ENCODE measurements at regions of chr20 and their contacts with region 1.

Region 1: GRCh38 chr20:36199345-36200257 is 36.7 kb upstream of the AAR2 start:
- DNase-seq: peak; percentile 56 to 82 (median 70)
- ATAC-seq: peak; percentile 72
- H3K4me3 ChIP-seq: no peak overlapping the region
- H3K4me3 Mint-ChIP-seq: no peak overlapping the region
- H3K27ac ChIP-seq: no peak overlapping the region
- H3K27ac Mint-ChIP-seq: no peak overlapping the region
- H3K4me1 ChIP-seq: peaks cover 11% of the 10 kb centered on the region
- H3K4me1 Mint-ChIP-seq: peaks cover 6% of the 10 kb centered on the region
- H3K27me3 ChIP-seq: no peaks in the 10 kb centered on the region
- H3K27me3 Mint-ChIP-seq: peaks cover 18% of the 10 kb centered on the region
- CTCF ChIP-seq: peak; percentile 89

Region 2: DNA sequence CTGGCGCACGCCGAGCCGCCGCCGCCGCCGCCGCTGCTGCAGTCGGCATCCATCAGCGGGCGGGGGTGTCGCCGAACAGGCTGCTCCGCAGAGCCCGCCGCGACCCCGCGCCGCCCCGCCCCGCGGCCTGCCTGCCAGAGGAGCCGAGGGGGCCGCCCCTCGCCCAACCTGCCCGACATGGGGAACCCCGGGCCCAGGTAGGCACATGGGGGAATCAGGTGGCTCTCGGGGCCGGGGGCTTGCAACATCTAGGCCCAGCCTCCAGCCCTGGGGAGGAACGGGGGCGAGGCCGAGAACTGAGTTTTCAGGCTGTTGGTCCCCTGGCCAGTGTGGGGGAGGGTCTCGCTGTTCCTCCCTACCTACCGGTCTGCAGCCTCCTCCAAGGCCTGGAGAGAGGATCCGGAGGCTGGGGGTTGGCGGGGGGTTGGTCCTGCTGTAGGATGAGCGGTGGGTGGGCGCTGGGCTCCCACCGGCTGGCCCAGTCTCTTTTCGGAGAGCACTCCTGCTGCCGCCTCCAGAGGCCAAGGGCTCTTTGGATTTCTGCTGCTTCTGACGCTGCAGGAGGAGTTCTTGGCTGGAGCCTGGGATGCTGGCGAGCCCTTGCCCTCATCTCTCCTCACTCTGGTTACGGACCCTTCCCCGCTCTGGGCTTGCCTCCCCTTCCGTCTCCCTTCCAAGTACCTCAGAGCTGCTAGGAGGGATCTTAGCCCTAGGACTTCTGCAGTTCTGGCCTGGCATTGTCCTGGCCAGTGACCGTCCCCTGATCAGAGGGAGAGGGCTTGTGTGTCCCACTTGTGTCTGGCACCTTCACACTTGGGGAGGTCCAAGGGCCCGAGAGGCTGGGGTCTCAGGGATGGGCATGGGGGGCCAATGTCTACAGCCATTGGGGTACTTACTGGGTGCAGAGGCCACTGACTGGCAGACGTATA is 44.6 kb before region 1 on chr20 and contains the start of gene EPB41L1:
- CTCF ChIA-PET with region 1: interaction called, 4 read pairs
- POLR2A ChIA-PET with region 1: no interaction called
- intact Hi-C with region 1: loop called (anchors 1 to 2 kb)
- DNase-seq: no peak
- ATAC-seq: peak; percentile 45
- H3K4me3 ChIP-seq: peak within 1 kb of the TSS; percentile 43
- H3K4me3 Mint-ChIP-seq: peak within 1 kb of the TSS; percentile 78
- H3K27ac ChIP-seq: no peak within 1 kb of the TSS
- H3K27ac Mint-ChIP-seq: no peak within 1 kb of the TSS
- H3K4me1 ChIP-seq: peaks cover 15% of the 10 kb centered on the region
- H3K4me1 Mint-ChIP-seq: peaks cover 6% of the 10 kb centered on the region
- H3K27me3 ChIP-seq: peaks cover 31% of the 10 kb centered on the region in 2 experiments
- H3K27me3 Mint-ChIP-seq: peaks cover 53% of the 10 kb centered on the region
- CTCF ChIP-seq: no peak
- total RNA-seq, gene EPB41L1: 0.19 to 0.25 TPM

Region 3: GRCh38 chr20:36493013-36493800 is 293.6 kb after region 1 on chr20:
- CTCF ChIA-PET with region 1: no interaction called
- POLR2A ChIA-PET with region 1: no interaction called
- intact Hi-C with region 1: loop called in 1 of 2 experiments (anchors 5 kb)
- DNase-seq: peak in 5 of 14 experiments; percentile 11 to 43 (median 32)
- ATAC-seq: no peak
- H3K4me3 ChIP-seq: no peak overlapping the region
- H3K4me3 Mint-ChIP-seq: no peak overlapping the region
- H3K27ac ChIP-seq: peak overlapping the region in 1 of 2 donors; percentile 88
- H3K27ac Mint-ChIP-seq: peak overlapping the region; percentile 88
- H3K4me1 ChIP-seq: peaks cover 46% of the 10 kb centered on the region
- H3K4me1 Mint-ChIP-seq: peaks cover 45% of the 10 kb centered on the region
- H3K27me3 ChIP-seq: no peaks in the 10 kb centered on the region
- H3K27me3 Mint-ChIP-seq: no peaks in the 10 kb centered on the region
- CTCF ChIP-seq: no peak

Region 4: DNA sequence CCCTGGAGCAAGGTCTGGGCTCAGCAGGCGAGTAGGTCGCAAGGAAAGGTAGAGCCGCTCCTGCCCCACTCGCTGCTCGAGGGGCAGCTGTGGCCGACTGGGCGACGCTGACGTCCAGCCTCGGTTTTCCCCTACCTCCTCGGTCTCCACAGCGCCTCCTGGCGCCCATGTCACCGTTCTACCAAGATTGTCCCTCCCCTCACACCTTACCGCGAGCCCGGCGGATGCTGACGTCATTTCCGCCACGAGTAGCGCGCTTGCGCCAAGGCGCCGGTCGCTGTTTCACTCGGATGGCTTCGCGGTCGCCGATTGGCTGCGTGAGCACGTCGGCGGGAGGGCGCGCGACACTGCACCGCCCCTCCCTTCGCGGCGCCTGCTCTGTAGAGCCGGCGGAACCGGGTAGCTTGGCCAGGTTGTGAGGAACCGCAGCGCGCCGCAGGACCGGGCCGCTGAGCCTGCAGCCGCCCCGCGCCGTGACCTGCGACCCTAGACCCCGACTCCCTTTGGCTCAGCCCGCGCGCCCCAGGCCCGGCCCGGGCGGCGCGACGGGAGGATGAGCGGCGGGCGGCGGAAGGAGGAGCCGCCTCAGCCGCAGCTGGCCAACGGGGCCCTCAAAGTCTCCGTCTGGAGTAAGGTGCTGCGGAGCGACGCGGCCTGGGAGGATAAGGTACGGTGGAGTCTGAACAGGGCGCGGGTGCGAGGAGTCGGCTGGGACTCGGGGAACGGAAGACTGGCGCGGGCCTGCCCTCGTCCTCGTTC is 406.0 kb after region 1 on chr20 and contains the start of gene RAB5IF:
- CTCF ChIA-PET with region 1: no interaction called
- POLR2A ChIA-PET with region 1: no interaction called
- intact Hi-C with region 1: no loop called
- DNase-seq: peak; percentile 97 to 100 (median 99)
- ATAC-seq: peak; percentile 89
- H3K4me3 ChIP-seq: peak within 1 kb of the TSS; percentile 100
- H3K4me3 Mint-ChIP-seq: peak within 1 kb of the TSS; percentile 98
- H3K27ac ChIP-seq: peak within 1 kb of the TSS; percentile 93 to 97
- H3K27ac Mint-ChIP-seq: peak within 1 kb of the TSS; percentile 97
- H3K4me1 ChIP-seq: peaks cover 37% of the 10 kb centered on the region
- H3K4me1 Mint-ChIP-seq: peaks cover 35% of the 10 kb centered on the region
- H3K27me3 ChIP-seq: no peaks in the 10 kb centered on the region
- H3K27me3 Mint-ChIP-seq: no peaks in the 10 kb centered on the region
- CTCF ChIP-seq: peak; percentile 95
- total RNA-seq, gene RAB5IF: 62.6 to 74.8 TPM

Region 5: GRCh38 chr20:36754656-36755222 is 555.1 kb after region 1 on chr20:
- CTCF ChIA-PET with region 1: interaction called, 3 read pairs
- POLR2A ChIA-PET with region 1: no interaction called
- intact Hi-C with region 1: loop called in 1 of 2 experiments (anchors 2 kb)
- DNase-seq: peak in 13 of 14 experiments; percentile 7 to 75 (median 22)
- ATAC-seq: peak; percentile 94
- H3K4me3 ChIP-seq: no peak overlapping the region
- H3K4me3 Mint-ChIP-seq: no peak overlapping the region
- H3K27ac ChIP-seq: no peak overlapping the region
- H3K27ac Mint-ChIP-seq: no peak overlapping the region
- H3K4me1 ChIP-seq: no peaks in the 10 kb centered on the region
- H3K4me1 Mint-ChIP-seq: no peaks in the 10 kb centered on the region
- H3K27me3 ChIP-seq: no peaks in the 10 kb centered on the region
- H3K27me3 Mint-ChIP-seq: no peaks in the 10 kb centered on the region
- CTCF ChIP-seq: peak; percentile 74

Region 6: GRCh38 chr20:37178839-37179670 is 979.5 kb after region 1 on chr20 and contains the starts of genes MROH8 and RPN2:
- CTCF ChIA-PET with region 1: no interaction called
- POLR2A ChIA-PET with region 1: no interaction called
- intact Hi-C with region 1: no loop called
- DNase-seq: peak; percentile 87 to 96 (median 93)
- ATAC-seq: peak; percentile 92
- H3K4me3 ChIP-seq: peak within 1 kb of the TSS; percentile 80
- H3K4me3 Mint-ChIP-seq: peak within 1 kb of the TSS; percentile 99
- H3K27ac ChIP-seq: peak within 1 kb of the TSS; percentile 84 to 90
- H3K27ac Mint-ChIP-seq: peak within 1 kb of the TSS; percentile 88
- H3K4me1 ChIP-seq: peaks cover 40% of the 10 kb centered on the region
- H3K4me1 Mint-ChIP-seq: peaks cover 46% of the 10 kb centered on the region
- H3K27me3 ChIP-seq: no peaks in the 10 kb centered on the region
- H3K27me3 Mint-ChIP-seq: no peaks in the 10 kb centered on the region
- CTCF ChIP-seq: no peak
- total RNA-seq, gene MROH8: 1.1 to 1.2 TPM
- total RNA-seq, gene RPN2: 62.8 to 65.8 TPM